Activated CD8-positive, alpha-beta T cell treated with anti-CD3 and anti-CD28 coated beads, Interleukin-2, amount 10 ng/mL, durations not matched to agents 7 days and 5 days (primary cell): ENCODE measurements at regions of chr5 and their contacts with region 1.

Region 1: DNA sequence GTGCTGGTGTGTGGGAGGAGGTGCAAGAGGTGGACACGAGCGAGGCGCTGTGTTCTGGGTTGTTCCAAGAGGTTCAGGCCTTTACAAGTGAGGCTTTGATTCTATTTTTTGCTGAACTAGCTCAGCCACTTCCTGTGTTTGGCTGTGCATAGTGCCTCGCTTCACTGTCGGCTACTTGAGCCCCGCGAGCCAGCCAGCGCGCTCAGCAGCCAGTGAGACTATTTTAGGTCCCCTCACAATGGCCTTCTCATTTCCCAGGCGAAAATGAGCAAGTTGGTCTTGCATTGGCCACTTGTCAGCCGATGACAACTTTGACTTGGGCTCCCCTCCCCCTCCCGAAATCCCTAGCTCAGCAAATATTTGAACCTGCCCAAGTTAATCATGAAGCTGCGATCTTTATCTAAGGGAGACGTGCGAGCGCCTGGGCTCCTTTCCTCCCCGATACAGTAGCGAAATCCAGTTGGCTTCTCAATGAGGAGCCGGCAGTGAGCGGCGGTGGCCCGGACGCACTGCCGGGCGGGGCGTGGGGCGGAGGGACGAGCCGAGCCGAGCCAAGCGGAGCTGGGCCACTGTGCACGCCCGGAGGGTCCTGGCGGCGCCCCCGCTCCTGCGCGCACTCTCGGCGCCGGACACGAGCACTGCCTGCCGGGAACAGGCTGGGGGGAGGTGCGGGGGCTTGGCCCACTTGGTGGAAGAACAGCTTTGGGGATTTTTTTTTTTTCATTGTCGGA is 72.6 kb downstream of the PIK3R1 start:
- DNase-seq: peak; percentile 76
- ATAC-seq: peak; percentile 89
- H3K4me3 Mint-ChIP-seq: peak overlapping the region; percentile 84
- H3K27ac Mint-ChIP-seq: peak overlapping the region; percentile 96
- H3K4me1 Mint-ChIP-seq: peaks cover 78% of the 10 kb centered on the region
- H3K27me3 Mint-ChIP-seq: no peaks in the 10 kb centered on the region

Region 2: GRCh38 chr5:68215208-68215897 is 72.8 kb before region 1 on chr5 and contains the start of gene PIK3R1:
- CTCF ChIA-PET with region 1: interaction called, 9 read pairs
- POLR2A ChIA-PET with region 1: interaction called, 10 read pairs
- DNase-seq: peak; percentile 93
- ATAC-seq: peak; percentile 83
- H3K4me3 Mint-ChIP-seq: peak within 1 kb of the TSS; percentile 89
- H3K27ac Mint-ChIP-seq: peak within 1 kb of the TSS; percentile 96
- H3K4me1 Mint-ChIP-seq: peaks cover 35% of the 10 kb centered on the region
- H3K27me3 Mint-ChIP-seq: no peaks in the 10 kb centered on the region
- total RNA-seq, gene PIK3R1: 61.1 to 65.0 TPM

Region 3: DNA sequence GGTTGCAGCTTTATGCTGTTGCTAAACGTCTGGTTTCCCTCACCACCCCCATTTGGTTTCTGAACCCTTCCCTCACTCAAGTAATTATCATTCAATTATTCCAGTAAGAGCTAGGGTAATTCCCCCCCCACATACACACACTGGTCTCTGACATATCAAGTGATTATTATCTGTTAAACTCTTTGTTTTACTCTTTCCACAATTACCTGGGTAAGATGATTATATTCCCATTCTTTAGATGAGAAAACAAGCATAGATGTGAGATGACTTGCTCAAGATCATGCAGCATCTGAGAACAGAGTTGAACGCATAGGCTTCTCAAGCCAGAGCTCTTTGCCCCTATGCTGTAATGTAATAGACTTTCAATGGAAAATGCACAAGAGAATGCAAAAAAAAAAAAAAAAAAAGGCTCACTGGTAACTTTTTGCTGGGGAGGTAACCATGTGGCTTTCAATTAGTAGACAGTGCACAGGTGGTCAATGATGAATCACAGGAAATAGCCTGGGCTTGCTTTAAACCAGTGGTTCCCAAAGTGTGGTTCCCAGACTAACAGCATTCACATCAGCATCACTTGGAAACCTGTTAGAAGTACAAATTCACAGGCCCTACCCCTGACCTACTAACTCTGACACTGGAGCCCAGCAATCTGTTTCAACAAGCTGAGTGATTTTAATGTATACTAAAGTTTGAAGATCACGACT is 15.0 kb after region 1 on chr5:
- CTCF ChIA-PET with region 1: interaction called, 27 read pairs
- POLR2A ChIA-PET with region 1: no interaction called
- DNase-seq: no peak
- ATAC-seq: peak; percentile 47
- H3K4me3 Mint-ChIP-seq: no peak overlapping the region
- H3K27ac Mint-ChIP-seq: peak overlapping the region; percentile 14
- H3K4me1 Mint-ChIP-seq: peaks cover 17% of the 10 kb centered on the region
- H3K27me3 Mint-ChIP-seq: no peaks in the 10 kb centered on the region

Region 4: DNA sequence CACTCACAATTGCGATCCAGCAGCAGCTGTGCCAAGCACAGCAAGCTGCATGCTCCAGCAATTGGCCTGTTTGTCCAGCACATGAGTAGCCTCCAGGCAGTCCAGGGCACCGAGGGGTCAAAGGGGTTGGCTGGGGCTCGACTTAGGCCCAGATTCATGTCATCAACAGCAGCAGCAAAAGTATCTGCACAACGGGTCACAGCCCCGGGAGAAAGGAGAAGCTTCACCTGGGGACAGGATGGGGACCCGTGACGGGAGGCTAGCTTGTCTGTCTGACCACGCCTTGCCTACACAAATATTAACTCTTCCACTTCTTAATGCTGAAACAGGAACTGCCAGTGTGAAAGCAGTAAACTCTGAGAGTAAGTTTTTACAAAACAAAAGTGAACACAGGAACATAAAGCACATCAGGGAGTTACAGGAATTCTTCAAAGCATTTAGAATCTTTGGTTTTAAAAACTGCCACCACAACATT is 118.7 kb after region 1 on chr5:
- CTCF ChIA-PET with region 1: interaction called, 16 read pairs
- POLR2A ChIA-PET with region 1: no interaction called
- DNase-seq: peak; percentile 40
- ATAC-seq: peak; percentile 55
- H3K4me3 Mint-ChIP-seq: peak overlapping the region; percentile 55
- H3K27ac Mint-ChIP-seq: peak overlapping the region; percentile 88
- H3K4me1 Mint-ChIP-seq: peaks cover 33% of the 10 kb centered on the region
- H3K27me3 Mint-ChIP-seq: no peaks in the 10 kb centered on the region

Region 5: GRCh38 chr5:68441309-68442073 is 153.3 kb after region 1 on chr5:
- CTCF ChIA-PET with region 1: interaction called, 20 read pairs
- POLR2A ChIA-PET with region 1: no interaction called
- DNase-seq: peak; percentile 35
- ATAC-seq: peak; percentile 83
- H3K4me3 Mint-ChIP-seq: no peak overlapping the region
- H3K27ac Mint-ChIP-seq: peak overlapping the region; percentile 6
- H3K4me1 Mint-ChIP-seq: peaks cover 42% of the 10 kb centered on the region
- H3K27me3 Mint-ChIP-seq: peaks cover 5% of the 10 kb centered on the region

Region 6: GRCh38 chr5:68460147-68460798 is 172.1 kb after region 1 on chr5:
- CTCF ChIA-PET with region 1: interaction called, 122 read pairs
- POLR2A ChIA-PET with region 1: interaction called, 3 read pairs
- DNase-seq: peak; percentile 72
- ATAC-seq: peak; percentile 66
- H3K4me3 Mint-ChIP-seq: no peak overlapping the region
- H3K27ac Mint-ChIP-seq: no peak overlapping the region
- H3K4me1 Mint-ChIP-seq: peaks cover 23% of the 10 kb centered on the region
- H3K27me3 Mint-ChIP-seq: no peaks in the 10 kb centered on the region